ENCODE measurements at regions of chr1 and their contacts with region 1.

Region 1: GRCh38 chr1:186212544-186213226 is 162.4 kb downstream of the TPR start:
- DNase-seq: peak; percentile 45
- H3K4me3 Mint-ChIP-seq: no peak overlapping the region
- H3K27ac Mint-ChIP-seq: no peak overlapping the region
- H3K4me1 Mint-ChIP-seq: no peaks in the 10 kb centered on the region
- H3K27me3 Mint-ChIP-seq: peaks cover 38% of the 10 kb centered on the region

Region 2: GRCh38 chr1:185720633-185721272 is 491.9 kb before region 1 on chr1:
- CTCF ChIA-PET with region 1: interaction called, 9 read pairs
- intact Hi-C with region 1: loop called (anchors 1 kb)
- DNase-seq: no peak
- H3K4me3 Mint-ChIP-seq: no peak overlapping the region
- H3K27ac Mint-ChIP-seq: no peak overlapping the region
- H3K4me1 Mint-ChIP-seq: no peaks in the 10 kb centered on the region
- H3K27me3 Mint-ChIP-seq: peaks cover 8% of the 10 kb centered on the region

Region 3: GRCh38 chr1:185960422-185961321 is 252.0 kb before region 1 on chr1:
- CTCF ChIA-PET with region 1: no interaction called
- intact Hi-C with region 1: loop called (anchors 10 kb)
- DNase-seq: no peak
- H3K4me3 Mint-ChIP-seq: no peak overlapping the region
- H3K27ac Mint-ChIP-seq: no peak overlapping the region
- H3K4me1 Mint-ChIP-seq: no peaks in the 10 kb centered on the region
- H3K27me3 Mint-ChIP-seq: peaks cover 8% of the 10 kb centered on the region